Spleen (tissue), 13 donors: ENCODE measurements at regions of chr1 and their contacts with region 1.

Region 1: GRCh38 chr1:205791568-205792180 is 16.4 kb upstream of the RAB29 start:
- DNase-seq: peak; percentile 82
- H3K4me3 ChIP-seq: no peak overlapping the region
- H3K27ac ChIP-seq: no peak overlapping the region
- H3K4me1 ChIP-seq: peaks cover 0 to 16% (median 0%) of the 10 kb centered on the region in 6 donors
- H3K27me3 ChIP-seq: no peaks in the 10 kb centered on the region
- CTCF ChIP-seq: peak; percentile 57 to 84 (median 77)
- POLR2A ChIP-seq: no peak

Region 2: DNA sequence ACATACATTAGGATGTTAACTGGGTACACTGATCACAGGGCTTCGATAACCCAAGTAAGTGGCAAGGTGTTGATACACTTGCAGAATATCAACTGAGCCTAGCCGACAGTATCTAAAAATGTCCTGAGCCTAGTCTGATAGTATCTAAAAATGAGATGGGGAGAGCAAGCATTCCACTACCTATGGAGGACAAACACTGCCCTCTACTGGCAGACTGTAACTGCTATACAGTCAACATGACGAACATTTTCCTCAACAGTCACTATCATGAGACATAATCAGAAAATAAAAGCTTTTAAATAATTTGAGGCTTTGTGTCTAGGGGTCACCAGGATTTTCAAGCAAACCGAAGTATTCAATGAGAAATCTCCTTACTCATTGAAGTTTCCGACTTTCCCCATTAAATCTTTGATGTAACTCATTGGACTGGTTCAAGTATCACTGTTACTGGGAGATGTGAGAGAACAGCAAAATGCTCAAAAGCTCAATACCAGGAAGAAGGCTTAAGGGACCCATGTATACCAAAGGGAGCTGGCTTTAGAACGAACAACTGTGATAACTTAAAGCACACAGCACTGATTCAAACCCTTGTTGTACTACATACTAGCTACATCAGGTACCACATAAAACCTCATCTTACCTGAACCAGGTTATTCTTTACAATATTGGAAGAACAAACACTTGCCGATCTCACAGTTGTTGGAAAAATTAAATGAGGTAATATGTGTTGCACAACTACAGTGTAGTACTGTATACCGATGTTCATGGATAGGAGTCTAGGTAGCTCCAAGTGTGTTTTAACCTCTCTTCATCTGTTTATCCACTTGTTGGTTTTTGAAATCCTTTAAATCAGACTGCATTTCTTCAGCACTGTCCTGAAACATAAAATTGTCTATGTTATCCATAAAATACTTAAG is 80.3 kb before region 1 on chr1:
- intact Hi-C with region 1: no loop called
- DNase-seq: no peak
- H3K4me3 ChIP-seq: no peak overlapping the region
- H3K27ac ChIP-seq: peak overlapping the region in 1 of 8 donors; percentile 24
- H3K4me1 ChIP-seq: peaks cover 2 to 80% (median 25%) of the 10 kb centered on the region in 6 donors
- H3K27me3 ChIP-seq: no peaks in the 10 kb centered on the region
- CTCF ChIP-seq: peak; percentile 71 to 90 (median 82)
- POLR2A ChIP-seq: no peak

Region 3: GRCh38 chr1:205919026-205919746 is 127.5 kb after region 1 on chr1:
- intact Hi-C with region 1: loop called (anchors 10 kb)
- DNase-seq: peak; percentile 79
- H3K4me3 ChIP-seq: no peak overlapping the region
- H3K27ac ChIP-seq: no peak overlapping the region
- H3K4me1 ChIP-seq: peaks cover 0 to 41% (median 9%) of the 10 kb centered on the region in 6 donors
- H3K27me3 ChIP-seq: peaks cover 0 to 11% (median 0%) of the 10 kb centered on the region in 7 donors
- CTCF ChIP-seq: peak; percentile 86 to 97 (median 94)
- POLR2A ChIP-seq: no peak

Region 4: GRCh38 chr1:205977402-205978014 is 185.8 kb after region 1 on chr1:
- intact Hi-C with region 1: loop called (anchors 2 kb)
- DNase-seq: peak; percentile 92
- H3K4me3 ChIP-seq: no peak overlapping the region
- H3K27ac ChIP-seq: no peak overlapping the region
- H3K4me1 ChIP-seq: peaks cover 0 to 4% (median 0%) of the 10 kb centered on the region in 6 donors
- H3K27me3 ChIP-seq: no peaks in the 10 kb centered on the region
- CTCF ChIP-seq: peak; percentile 85 to 99 (median 94)
- POLR2A ChIP-seq: no peak

Region 5: GRCh38 chr1:206106328-206107167 is 314.9 kb after region 1 on chr1:
- intact Hi-C with region 1: loop called (anchors 10 kb)
- DNase-seq: peak; percentile 93
- H3K4me3 ChIP-seq: no peak overlapping the region
- H3K27ac ChIP-seq: no peak overlapping the region
- H3K4me1 ChIP-seq: peaks cover 6 to 23% (median 10%) of the 10 kb centered on the region in 6 donors
- H3K27me3 ChIP-seq: no peaks in the 10 kb centered on the region
- CTCF ChIP-seq: peak; percentile 76 to 91 (median 87)
- POLR2A ChIP-seq: no peak